ENCODE measurements at regions of chr6 and their contacts with region 1.

Region 1: DNA sequence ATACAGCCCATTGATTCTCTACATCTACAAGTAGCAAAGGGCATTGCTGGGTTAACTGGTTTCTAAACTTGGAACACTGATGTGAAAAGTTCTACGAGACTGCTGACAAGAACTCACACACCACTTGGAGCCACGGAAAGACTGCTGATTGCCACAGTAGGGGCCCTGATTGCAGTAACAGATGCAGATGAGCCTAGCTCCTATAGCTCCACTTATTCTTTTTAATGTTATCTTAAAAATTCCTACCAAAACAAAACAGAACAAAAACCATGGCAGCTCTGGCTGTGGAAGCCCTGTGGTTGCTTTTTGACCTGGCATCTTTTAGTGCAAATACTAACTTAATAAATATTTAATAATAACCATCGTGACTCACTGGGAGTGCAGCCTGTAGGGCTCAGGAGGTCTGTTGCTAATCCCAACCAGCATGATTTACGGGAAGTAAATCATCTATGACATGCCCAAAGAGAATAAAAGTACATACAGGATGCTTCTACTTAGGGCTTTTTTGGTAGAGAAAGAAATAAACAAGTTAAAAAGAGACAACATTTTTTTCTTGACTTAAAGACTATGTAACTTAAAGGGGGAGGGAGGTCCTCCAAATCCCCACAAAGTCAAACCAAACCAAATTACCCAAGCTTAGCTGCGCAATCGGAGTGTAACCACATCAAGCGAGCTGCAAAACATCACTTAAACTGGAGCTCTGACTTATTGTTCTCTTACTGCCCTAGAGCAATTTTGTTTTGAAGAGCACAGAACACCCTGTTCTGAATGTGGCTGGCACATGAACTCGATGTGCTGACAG is 87.2 kb downstream of the FKBP5 start:
- DNase-seq: peak; percentile 92
- H3K4me3 ChIP-seq: peak overlapping the region in 3 of 4 donors; percentile 21 to 31 (median 21)
- H3K27ac ChIP-seq: peak overlapping the region; percentile 88 to 98 (median 91)
- H3K4me1 ChIP-seq: peaks cover 0 to 82% (median 75%) of the 10 kb centered on the region in 4 donors
- H3K27me3 ChIP-seq: no peaks in the 10 kb centered on the region
- CTCF ChIP-seq: no peak
- EP300 ChIP-seq: peak; percentile 100
- POLR2A ChIP-seq: no peak

Region 2: DNA sequence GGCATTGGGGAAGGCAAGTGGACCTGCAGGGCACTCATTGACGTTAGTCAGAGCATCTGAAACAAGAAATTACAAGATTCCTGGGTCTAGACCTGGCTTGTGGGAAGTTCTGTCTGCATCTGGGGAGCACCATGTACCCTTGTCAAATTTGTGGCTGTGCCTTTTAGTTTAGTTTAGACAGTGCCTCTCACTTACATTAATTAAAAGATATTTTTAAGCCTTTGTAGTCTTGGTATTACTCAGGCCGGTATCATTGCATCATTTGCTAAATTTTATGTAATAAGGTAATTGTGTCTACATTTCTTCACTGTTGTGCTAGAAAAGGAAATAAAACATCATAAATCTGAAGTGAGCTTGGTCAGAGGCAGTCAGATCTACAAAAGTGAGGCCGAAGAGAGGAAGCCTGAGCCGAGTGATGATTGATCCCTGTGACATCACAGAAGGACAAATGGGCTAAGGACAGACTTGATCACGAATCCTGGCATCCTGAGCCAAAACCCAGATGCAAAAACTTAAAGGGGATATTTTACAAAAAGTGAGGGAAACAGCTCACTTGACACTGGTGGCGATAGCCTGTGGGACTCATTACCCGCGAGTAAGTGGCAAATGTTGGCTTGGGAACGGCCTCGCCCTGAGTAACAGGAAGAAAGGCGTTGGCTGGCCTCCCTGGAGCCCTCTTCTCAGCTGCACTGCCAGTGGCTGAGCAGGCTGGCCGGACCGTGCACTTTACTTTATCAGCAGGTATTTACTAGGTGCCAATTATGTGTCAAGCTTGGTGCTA is 566.9 kb before region 1 on chr6:
- intact Hi-C with region 1: loop called (anchors 10 kb)
- DNase-seq: no peak
- H3K4me3 ChIP-seq: no peak overlapping the region
- H3K27ac ChIP-seq: peak overlapping the region; percentile 74 to 95 (median 85)
- H3K4me1 ChIP-seq: peaks cover 0 to 85% (median 84%) of the 10 kb centered on the region in 4 donors
- H3K27me3 ChIP-seq: no peaks in the 10 kb centered on the region
- CTCF ChIP-seq: no peak
- EP300 ChIP-seq: peak in 2 of 4 donors; percentile 51 to 89
- POLR2A ChIP-seq: no peak